GM12878 (cell line): ENCODE measurements at regions of chr1 and their contacts with region 1.

Region 1: GRCh38 chr1:234309598-234310459 is 63.4 kb upstream of the COA6 start:
- DNase-seq: no peak
- ATAC-seq: peak; percentile 93
- H3K4me3 ChIP-seq: no peak overlapping the region
- H3K27ac ChIP-seq: no peak overlapping the region
- H3K4me1 ChIP-seq: peaks cover 10% of the 10 kb centered on the region
- H3K27me3 ChIP-seq: no peaks in the 10 kb centered on the region; a peak in 1 of 4 replicates
- CTCF ChIP-seq: peak; percentile 88 to 93 (median 91)
- EP300 ChIP-seq: no peak
- POLR2A ChIP-seq: no peak
- RAD21 ChIP-seq: peak; percentile 80

Region 2: GRCh38 chr1:234125283-234125682 is 184.5 kb before region 1 on chr1:
- CTCF ChIA-PET with region 1: interaction called, 48 read pairs
- POLR2A ChIA-PET with region 1: no interaction called
- RAD21 ChIA-PET with region 1: interaction called, 4 read pairs
- SMC1A ChIA-PET with region 1: interaction called, 8 read pairs
- in situ Hi-C with region 1: no loop called
- intact Hi-C with region 1: no loop called
- DNase-seq: no peak
- ATAC-seq: peak; percentile 98
- H3K4me3 ChIP-seq: no peak overlapping the region
- H3K27ac ChIP-seq: no peak overlapping the region
- H3K4me1 ChIP-seq: no peaks in the 10 kb centered on the region
- H3K27me3 ChIP-seq: peaks cover 0 to 7% of the 10 kb centered on the region in 2 experiments; a peak in 2 of 4 replicates
- CTCF ChIP-seq: peak; percentile 56 to 63 (median 59); a peak in 5 of 6 replicates
- EP300 ChIP-seq: no peak
- POLR2A ChIP-seq: no peak
- RAD21 ChIP-seq: peak; percentile 61

Region 3: DNA sequence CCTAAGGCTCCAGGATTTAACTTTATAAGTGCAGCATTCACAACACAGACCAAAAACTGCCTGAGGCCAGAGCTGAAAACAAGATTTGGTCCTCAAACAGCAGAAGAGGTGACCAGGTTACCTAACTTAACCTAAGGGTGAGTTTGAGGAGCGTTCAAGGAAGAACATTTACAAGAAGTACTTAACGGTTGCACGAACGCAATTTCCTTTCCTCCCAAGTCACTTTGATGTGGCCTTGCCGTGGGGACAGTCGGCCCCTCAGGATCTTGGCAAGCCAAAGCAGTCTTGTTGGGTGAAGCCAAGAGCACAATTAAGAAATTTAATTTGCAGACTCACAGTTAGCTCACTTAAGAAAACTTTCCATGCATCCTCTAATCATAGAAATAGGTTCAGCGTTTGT is 139.2 kb before region 1 on chr1:
- CTCF ChIA-PET with region 1: interaction called, 16 read pairs
- POLR2A ChIA-PET with region 1: no interaction called
- RAD21 ChIA-PET with region 1: interaction called, 3 read pairs
- SMC1A ChIA-PET with region 1: interaction called, 6 read pairs
- in situ Hi-C with region 1: no loop called
- intact Hi-C with region 1: no loop called
- DNase-seq: no peak
- ATAC-seq: no peak
- H3K4me3 ChIP-seq: no peak overlapping the region
- H3K27ac ChIP-seq: no peak overlapping the region
- H3K4me1 ChIP-seq: peaks cover 6% of the 10 kb centered on the region; the same call in 1 of the 2 replicates
- H3K27me3 ChIP-seq: 0 out of 4 replicates have a peak, but pooled peaks cover 0 to 2% of the 10 kb centered on the region in 2 experiments
- CTCF ChIP-seq: no peak
- EP300 ChIP-seq: no peak
- POLR2A ChIP-seq: no peak
- RAD21 ChIP-seq: no peak

Region 4: DNA sequence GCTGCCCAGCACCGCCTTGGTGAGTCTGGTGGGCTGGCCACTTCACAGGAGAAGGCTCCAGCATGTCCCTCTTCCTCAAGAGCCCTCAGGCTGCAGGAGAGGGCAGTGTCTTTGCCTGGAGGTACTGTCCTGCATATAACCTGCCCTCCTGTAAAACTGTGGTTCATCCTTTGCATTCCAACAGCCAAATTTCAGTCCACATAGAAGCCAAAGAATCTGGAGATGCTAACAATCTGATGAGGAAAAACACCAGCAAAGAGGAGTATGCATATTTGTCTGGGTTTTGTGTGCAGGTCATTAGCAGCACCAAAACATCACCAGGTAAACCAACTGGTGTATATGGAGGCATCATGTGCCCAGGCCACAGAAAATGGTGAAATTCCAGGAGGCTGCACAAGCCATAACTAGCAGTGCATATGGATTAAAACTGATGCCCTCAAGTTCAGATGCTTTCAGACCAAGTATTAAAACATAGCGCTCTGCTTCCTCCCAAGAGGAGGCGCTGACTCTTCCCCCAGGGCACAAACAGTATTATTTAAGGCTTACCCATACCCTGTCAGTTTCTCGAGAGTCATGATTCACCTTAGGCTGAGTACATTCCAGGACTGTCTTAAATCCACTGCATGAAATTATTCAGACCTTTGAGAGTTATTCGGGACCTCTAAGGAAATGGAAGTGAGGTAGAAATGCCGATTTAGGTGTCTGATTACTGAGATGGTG is 87.1 kb before region 1 on chr1:
- CTCF ChIA-PET with region 1: interaction called, 312 read pairs
- POLR2A ChIA-PET with region 1: no interaction called
- RAD21 ChIA-PET with region 1: interaction called, 17 read pairs
- SMC1A ChIA-PET with region 1: interaction called, 5 read pairs
- in situ Hi-C with region 1: loop called (anchors 25 kb)
- intact Hi-C with region 1: no loop called
- DNase-seq: no peak
- ATAC-seq: no peak
- H3K4me3 ChIP-seq: no peak overlapping the region
- H3K27ac ChIP-seq: no peak overlapping the region
- H3K4me1 ChIP-seq: no peaks in the 10 kb centered on the region
- H3K27me3 ChIP-seq: no peaks in the 10 kb centered on the region
- CTCF ChIP-seq: no peak
- EP300 ChIP-seq: no peak
- POLR2A ChIP-seq: no peak
- RAD21 ChIP-seq: no peak

Region 5: GRCh38 chr1:234262754-234263105 is 47.1 kb before region 1 on chr1:
- CTCF ChIA-PET with region 1: interaction called, 17 read pairs
- POLR2A ChIA-PET with region 1: no interaction called
- RAD21 ChIA-PET with region 1: interaction called, 3 read pairs
- SMC1A ChIA-PET with region 1: no interaction called
- in situ Hi-C with region 1: no loop called
- intact Hi-C with region 1: no loop called
- DNase-seq: no peak
- ATAC-seq: no peak
- H3K4me3 ChIP-seq: no peak overlapping the region
- H3K27ac ChIP-seq: no peak overlapping the region
- H3K4me1 ChIP-seq: no peaks in the 10 kb centered on the region
- H3K27me3 ChIP-seq: no peaks in the 10 kb centered on the region
- CTCF ChIP-seq: no peak
- EP300 ChIP-seq: no peak
- POLR2A ChIP-seq: no peak
- RAD21 ChIP-seq: no peak

Region 6: GRCh38 chr1:234295068-234295467 is 14.8 kb before region 1 on chr1:
- CTCF ChIA-PET with region 1: interaction called, 30 read pairs
- POLR2A ChIA-PET with region 1: no interaction called
- RAD21 ChIA-PET with region 1: interaction called, 5 read pairs
- SMC1A ChIA-PET with region 1: interaction called, 8 read pairs
- in situ Hi-C with region 1: no loop called
- intact Hi-C with region 1: no loop called
- DNase-seq: no peak
- ATAC-seq: no peak
- H3K4me3 ChIP-seq: no peak overlapping the region
- H3K27ac ChIP-seq: no peak overlapping the region
- H3K4me1 ChIP-seq: no peaks in the 10 kb centered on the region
- H3K27me3 ChIP-seq: no peaks in the 10 kb centered on the region
- CTCF ChIP-seq: no peak
- EP300 ChIP-seq: no peak
- POLR2A ChIP-seq: no peak
- RAD21 ChIP-seq: no peak

Region 7: DNA sequence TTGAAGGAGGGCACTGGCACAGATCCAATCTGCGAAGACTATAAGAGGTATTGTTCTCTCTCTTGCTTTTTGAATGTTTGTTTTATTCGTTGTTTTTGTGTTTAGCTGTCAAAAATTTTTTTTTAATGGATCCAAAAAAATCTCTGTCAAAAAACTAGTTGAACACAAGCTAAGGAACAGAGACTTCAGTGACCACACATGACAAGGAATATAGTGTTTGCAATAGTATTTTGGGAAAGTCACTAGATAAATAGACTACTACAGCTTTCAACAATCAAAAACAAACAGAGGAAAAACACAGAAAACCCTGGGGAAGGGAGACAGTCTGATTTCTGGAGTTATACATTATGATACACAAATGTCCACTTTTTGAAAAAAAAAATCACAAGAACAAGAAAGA is 26.5 kb after region 1 on chr1:
- CTCF ChIA-PET with region 1: interaction called, 10 read pairs
- POLR2A ChIA-PET with region 1: no interaction called
- RAD21 ChIA-PET with region 1: no interaction called
- SMC1A ChIA-PET with region 1: interaction called, 3 read pairs
- in situ Hi-C with region 1: no loop called
- intact Hi-C with region 1: no loop called
- DNase-seq: no peak
- ATAC-seq: no peak
- H3K4me3 ChIP-seq: no peak overlapping the region
- H3K27ac ChIP-seq: no peak overlapping the region
- H3K4me1 ChIP-seq: no peaks in the 10 kb centered on the region
- H3K27me3 ChIP-seq: no peaks in the 10 kb centered on the region
- CTCF ChIP-seq: no peak
- EP300 ChIP-seq: no peak
- POLR2A ChIP-seq: no peak
- RAD21 ChIP-seq: no peak

Region 8: GRCh38 chr1:234362558-234362957 is 52.7 kb after region 1 on chr1:
- CTCF ChIA-PET with region 1: no interaction called
- POLR2A ChIA-PET with region 1: no interaction called
- RAD21 ChIA-PET with region 1: no interaction called
- SMC1A ChIA-PET with region 1: no interaction called
- in situ Hi-C with region 1: no loop called
- intact Hi-C with region 1: no loop called
- DNase-seq: no peak
- ATAC-seq: no peak
- H3K4me3 ChIP-seq: no peak overlapping the region
- H3K27ac ChIP-seq: no peak overlapping the region
- H3K4me1 ChIP-seq: no peaks in the 10 kb centered on the region; the same call in 1 of the 2 replicates
- H3K27me3 ChIP-seq: no peaks in the 10 kb centered on the region
- CTCF ChIP-seq: no peak
- EP300 ChIP-seq: no peak
- POLR2A ChIP-seq: no peak
- RAD21 ChIP-seq: no peak

Region 9: DNA sequence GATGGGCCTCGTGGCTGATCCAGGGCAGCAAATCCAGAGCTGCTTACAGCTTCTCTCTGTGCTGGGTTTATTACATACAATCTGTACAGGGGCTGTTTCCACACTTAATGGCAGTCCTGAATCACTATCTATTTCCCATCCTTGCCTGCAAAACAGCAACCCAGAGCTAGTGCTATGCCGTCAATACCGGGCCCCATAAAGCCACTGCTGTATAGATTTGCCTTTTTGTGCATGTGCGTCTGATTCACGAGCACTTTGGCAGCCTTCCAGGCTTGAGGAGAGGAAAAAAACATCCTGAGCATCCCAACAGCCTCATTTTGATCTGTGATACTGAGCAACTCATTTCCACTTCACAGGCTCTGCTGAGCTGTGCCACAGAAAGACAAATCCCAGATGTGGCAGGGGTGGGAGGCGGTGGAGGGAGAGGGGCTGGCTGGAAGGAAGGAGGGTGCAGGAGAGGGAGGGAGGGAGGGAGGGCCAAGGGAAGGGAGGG is 234.3 kb after region 1 on chr1:
- CTCF ChIA-PET with region 1: no interaction called
- POLR2A ChIA-PET with region 1: no interaction called
- RAD21 ChIA-PET with region 1: no interaction called
- SMC1A ChIA-PET with region 1: no interaction called
- in situ Hi-C with region 1: no loop called
- intact Hi-C with region 1: no loop called
- DNase-seq: no peak
- ATAC-seq: no peak
- H3K4me3 ChIP-seq: no peak overlapping the region
- H3K27ac ChIP-seq: no peak overlapping the region
- H3K4me1 ChIP-seq: no peaks in the 10 kb centered on the region
- H3K27me3 ChIP-seq: no peaks in the 10 kb centered on the region
- CTCF ChIP-seq: no peak
- EP300 ChIP-seq: no peak
- POLR2A ChIP-seq: no peak
- RAD21 ChIP-seq: no peak